ENCODE measurements at regions of chr11 and their contacts with region 1.

Region 1: DNA sequence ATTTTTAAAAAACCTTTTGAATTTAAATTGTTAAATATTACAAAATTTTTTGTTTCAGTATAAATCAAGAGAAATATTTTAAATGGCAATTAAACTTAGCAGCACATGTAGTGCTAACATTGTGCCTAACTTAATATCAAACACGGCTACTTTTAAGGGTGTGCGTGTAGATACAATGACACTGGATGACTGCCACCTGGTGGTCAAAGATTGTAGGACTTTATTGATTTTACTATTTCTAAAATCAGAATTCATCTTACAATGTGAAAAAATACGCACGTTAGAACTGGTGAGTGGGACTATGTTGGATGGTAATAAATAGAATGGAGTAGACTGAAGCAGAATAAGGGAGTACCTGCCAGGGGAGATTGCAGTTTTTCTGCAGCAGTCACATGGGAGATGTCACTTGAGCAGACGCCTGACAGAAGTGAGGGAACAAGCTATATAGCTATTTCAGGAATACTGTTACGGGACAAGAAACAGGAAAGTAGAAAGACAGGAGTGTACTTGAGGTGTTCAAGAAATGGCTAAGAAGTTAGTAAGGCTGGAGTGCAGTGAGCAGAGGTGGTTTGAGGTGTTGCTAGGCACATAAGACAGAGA is 52.9 kb downstream of the UVRAG start:
- DNase-seq: no peak
- H3K4me3 ChIP-seq: no peak overlapping the region
- H3K27ac ChIP-seq: no peak overlapping the region
- H3K4me1 ChIP-seq: peaks cover 0 to 38% (median 24%) of the 10 kb centered on the region in 4 donors
- H3K27me3 ChIP-seq: no peaks in the 10 kb centered on the region
- CTCF ChIP-seq: peak; percentile 59 to 83 (median 80)
- EP300 ChIP-seq: no peak
- POLR2A ChIP-seq: no peak

Region 2: DNA sequence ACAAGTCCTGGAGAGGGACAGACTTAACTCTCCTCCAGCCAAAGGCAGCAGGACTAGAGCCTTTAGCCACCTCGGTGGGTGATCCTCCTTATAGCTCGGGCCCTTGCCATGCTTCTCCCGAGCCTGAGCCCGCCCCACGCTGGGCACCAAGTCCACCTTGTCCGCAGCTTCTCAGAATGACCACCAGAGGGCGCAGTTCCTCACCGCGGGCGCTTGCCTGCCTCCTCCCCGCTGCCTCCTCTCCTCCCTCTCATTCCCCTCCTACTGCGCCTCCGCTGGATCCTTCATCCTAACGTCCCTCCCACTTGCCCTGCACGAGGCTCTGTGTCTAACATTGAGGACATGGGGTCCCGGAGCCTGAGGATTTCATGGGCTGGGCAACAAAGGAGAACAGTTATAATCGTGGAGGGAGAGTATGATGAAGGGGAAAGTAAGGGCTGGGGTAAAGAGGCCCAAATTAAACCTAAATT is 161.6 kb before region 1 on chr11:
- intact Hi-C with region 1: loop called (anchors 10 kb)
- DNase-seq: peak; percentile 85
- H3K4me3 ChIP-seq: no peak overlapping the region
- H3K27ac ChIP-seq: peak overlapping the region in 2 of 4 donors; percentile 34 to 46
- H3K4me1 ChIP-seq: peaks cover 0 to 14% (median 11%) of the 10 kb centered on the region in 4 donors
- H3K27me3 ChIP-seq: no peaks in the 10 kb centered on the region
- CTCF ChIP-seq: peak; percentile 84 to 97 (median 89)
- EP300 ChIP-seq: no peak
- POLR2A ChIP-seq: no peak

Region 3: DNA sequence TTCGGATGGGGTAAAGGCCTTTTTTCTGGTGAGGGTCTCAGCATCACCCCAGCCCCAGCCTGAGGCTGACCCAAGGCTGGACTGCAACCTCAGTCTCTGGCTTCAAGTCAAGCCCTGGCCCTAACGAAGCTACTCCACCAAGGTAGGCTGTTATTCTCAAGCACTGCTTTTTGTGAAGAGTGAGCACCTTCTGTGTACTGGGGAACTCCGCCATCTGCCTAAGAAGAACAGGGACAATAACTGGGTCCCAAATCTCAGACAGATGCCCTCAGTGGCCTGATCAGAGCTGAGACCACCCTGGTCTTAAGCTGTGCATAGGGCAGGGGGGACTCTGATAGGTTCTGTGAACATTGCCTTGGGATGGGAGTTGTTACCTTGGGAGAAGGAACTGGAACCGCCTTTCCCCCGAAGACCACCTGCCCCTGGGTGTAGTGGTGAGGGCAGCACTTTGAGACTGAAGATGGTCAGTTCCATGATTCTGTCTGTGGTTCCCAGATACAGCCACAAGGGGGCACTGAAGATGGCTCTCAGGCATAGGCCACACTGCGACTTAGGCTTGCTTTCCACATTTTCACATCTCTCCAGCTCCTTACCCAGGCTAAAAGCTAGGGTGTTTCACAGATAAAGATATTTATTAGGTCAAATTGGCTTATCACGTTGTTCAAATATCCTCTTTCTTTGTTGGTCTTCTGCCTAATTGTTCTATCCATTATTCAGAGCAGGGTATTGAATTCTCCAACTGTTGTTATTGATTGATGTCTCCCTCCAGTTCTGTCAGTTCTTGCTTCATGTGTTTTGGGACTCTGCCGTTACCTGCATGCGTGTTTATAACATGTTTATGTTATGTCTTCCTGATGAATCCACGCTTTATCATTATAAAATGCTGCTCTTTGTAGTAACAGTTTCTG is 64.7 kb before region 1 on chr11:
- intact Hi-C with region 1: loop called (anchors 1 kb)
- DNase-seq: peak; percentile 88
- H3K4me3 ChIP-seq: no peak overlapping the region
- H3K27ac ChIP-seq: no peak overlapping the region
- H3K4me1 ChIP-seq: no peaks in the 10 kb centered on the region
- H3K27me3 ChIP-seq: no peaks in the 10 kb centered on the region
- CTCF ChIP-seq: peak; percentile 77 to 95 (median 92)
- EP300 ChIP-seq: no peak
- POLR2A ChIP-seq: no peak